GM10248 (cell line): ENCODE measurements at regions of chr7 and their contacts with region 1.

Region 1: DNA sequence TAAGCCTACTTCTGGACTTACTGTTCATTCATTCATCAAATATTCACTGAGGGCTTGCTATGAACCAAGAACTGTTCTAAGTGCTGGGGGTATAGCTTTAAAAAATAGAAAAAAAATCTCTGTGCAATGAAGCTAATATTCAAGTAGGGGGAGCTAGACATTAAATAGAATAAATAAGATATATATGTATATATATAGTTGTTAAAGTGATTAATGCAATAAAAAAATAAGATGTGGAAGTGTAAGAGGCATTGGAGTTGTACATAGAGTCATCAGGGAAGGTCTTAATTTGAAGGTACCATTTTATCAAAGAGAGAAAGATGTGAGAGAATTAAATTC is 181.2 kb upstream of the AGR3 start:
- DNase-seq: no peak
- CTCF ChIP-seq: no peak

Region 2: DNA sequence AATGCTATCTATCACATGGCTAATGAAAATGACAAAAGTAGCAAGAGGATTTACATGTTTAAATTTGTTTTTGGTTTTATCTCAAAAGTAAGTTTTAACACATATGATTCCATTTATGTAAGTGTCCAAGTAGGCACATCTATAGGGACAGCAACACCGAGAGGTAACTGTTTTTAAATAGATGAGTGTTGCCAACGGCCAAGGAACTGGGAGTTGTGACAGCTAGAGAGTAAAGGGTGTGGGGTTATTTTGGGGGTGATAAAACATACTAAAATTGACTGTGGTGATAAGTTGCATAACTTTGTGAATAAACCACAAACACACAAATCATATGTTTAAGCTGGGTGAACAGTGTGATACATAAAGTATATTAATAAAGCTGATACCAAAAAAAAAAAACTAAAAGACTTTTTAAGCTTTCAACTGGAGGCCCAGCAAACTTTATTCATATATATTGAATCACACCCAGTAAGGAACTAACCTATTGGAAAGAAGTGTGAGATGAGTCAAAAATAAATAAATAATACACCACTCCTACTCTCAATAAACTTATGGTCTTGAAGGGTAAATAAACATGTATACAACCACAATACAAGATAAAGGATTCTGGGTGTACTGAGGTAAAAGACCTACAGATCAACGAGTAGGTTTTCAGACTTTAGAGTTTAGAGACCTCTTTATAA is 503.4 kb before region 1 on chr7:
- CTCF ChIA-PET with region 1: no interaction called
- POLR2A ChIA-PET with region 1: no interaction called
- DNase-seq: no peak
- CTCF ChIP-seq: no peak

Region 3: DNA sequence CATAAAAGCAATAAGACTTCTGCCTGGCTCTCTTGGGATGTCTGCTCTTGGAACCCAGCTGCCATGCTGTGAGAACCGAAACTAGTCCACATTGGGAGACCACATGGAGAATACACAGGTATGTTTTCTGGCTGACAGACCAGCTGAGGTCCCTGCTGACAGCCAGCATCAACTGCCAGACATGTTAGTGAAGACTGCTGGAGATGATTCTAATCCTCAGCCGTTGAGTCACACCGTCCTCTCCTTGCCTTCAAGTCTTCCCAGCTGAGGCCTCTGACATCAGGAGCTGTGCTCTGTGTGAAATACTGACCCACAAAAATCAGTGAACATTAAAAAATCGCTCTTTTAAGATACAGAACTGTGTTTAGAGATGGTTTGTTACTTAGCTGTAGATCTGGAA is 221.3 kb before region 1 on chr7:
- CTCF ChIA-PET with region 1: no interaction called
- POLR2A ChIA-PET with region 1: no interaction called
- DNase-seq: no peak
- CTCF ChIP-seq: no peak

Region 4: DNA sequence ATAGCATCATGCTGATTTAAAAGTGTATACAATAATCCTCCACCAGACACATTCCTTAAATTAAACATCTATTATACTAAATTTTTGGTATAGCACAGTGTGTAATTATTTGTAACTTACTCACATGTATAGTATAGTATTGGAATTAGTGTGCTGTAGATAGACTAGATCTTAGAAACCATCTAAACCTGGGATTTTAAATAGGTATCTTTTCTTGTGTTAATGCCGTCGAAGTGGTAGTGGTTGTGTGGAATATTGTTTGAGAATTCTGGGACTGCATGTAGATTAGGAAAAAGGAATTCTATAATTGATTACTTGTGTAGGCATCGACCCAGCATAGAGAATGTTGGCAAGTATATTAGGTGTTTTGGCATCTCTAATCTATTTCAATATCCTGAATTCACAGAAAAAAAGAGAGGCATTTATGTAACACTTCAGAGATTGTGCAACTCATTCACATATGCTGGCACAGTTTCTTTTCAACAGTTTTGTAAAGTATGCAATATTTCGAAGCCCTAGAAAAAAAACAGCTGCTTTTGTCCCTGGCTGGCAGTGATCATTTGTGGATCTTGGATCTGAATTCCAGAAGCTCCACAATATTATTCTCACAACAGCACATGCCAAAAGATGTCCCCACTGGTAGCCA is 35.7 kb before region 1 on chr7:
- CTCF ChIA-PET with region 1: no interaction called
- POLR2A ChIA-PET with region 1: no interaction called
- DNase-seq: no peak
- CTCF ChIP-seq: no peak

Region 5: GRCh38 chr7:17046666-17047065 is 16.3 kb before region 1 on chr7:
- CTCF ChIA-PET with region 1: interaction called, 11 read pairs
- POLR2A ChIA-PET with region 1: no interaction called
- DNase-seq: no peak
- CTCF ChIP-seq: no peak